MCF 10A (cell line): ENCODE measurements at regions of chr7 and their contacts with region 1.

Region 1: DNA sequence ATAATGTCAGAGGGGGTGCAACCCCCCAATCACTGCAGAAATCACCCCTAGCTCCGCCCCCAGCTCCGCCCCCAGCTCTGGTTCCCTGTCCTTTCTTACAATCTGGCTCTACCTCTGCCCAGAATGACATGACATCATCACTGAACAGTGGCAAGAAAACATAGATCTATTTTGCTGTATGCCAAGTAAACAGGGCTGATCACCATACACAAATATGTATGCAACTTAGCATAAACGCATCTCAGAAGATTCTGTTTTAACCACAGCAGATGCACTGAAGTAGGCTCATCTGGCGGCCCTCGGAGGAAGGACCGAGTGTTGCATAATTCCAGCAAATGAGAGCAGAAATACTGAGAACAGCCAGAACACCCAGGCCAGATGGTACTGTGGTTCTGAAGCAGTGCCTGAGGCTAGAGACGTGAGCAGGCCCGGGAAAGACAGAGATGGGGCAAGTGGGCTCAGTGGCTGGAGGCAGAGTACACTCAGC is 293.3 kb upstream of the KLF14 start:
- DNase-seq: peak; percentile 89
- H3K4me3 Mint-ChIP-seq: peak overlapping the region; percentile 64
- H3K27ac Mint-ChIP-seq: peak overlapping the region; percentile 88
- H3K4me1 Mint-ChIP-seq: peaks cover 31% of the 10 kb centered on the region
- H3K27me3 Mint-ChIP-seq: no peaks in the 10 kb centered on the region
- CTCF ChIP-seq: no peak

Region 2: DNA sequence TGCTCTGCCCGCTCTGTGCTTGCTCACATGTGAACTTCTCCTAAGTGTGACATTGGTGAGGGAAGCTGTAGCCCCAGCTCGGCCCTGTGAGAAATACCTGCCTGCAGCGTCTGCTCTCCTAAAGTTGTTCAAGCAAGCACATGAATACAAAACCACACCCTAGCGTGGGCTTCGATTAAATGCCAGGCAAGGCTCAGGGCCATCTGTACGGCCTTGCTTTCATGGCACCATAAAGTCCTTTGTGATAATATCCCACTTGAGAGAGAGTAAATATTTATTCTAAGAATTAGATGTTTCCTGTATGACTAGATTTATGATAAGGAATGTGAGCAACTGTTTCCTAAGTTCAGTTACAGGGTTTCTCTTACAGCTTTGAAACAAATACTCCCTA is 30.5 kb before region 1 on chr7:
- CTCF ChIA-PET with region 1: interaction called, 3 read pairs
- POLR2A ChIA-PET with region 1: interaction called, 28 read pairs
- intact Hi-C with region 1: no loop called
- DNase-seq: peak; percentile 73
- H3K4me3 Mint-ChIP-seq: peak overlapping the region; percentile 21
- H3K27ac Mint-ChIP-seq: peak overlapping the region; percentile 96
- H3K4me1 Mint-ChIP-seq: peaks cover 54% of the 10 kb centered on the region
- H3K27me3 Mint-ChIP-seq: no peaks in the 10 kb centered on the region
- CTCF ChIP-seq: no peak

Region 3: GRCh38 chr7:131007394-131008330 is 19.7 kb before region 1 on chr7:
- CTCF ChIA-PET with region 1: interaction called, 7 read pairs
- POLR2A ChIA-PET with region 1: interaction called, 61 read pairs
- intact Hi-C with region 1: no loop called
- DNase-seq: peak; percentile 87
- H3K4me3 Mint-ChIP-seq: peak overlapping the region; percentile 15
- H3K27ac Mint-ChIP-seq: peak overlapping the region; percentile 84
- H3K4me1 Mint-ChIP-seq: peaks cover 46% of the 10 kb centered on the region
- H3K27me3 Mint-ChIP-seq: no peaks in the 10 kb centered on the region
- CTCF ChIP-seq: peak; percentile 58

Region 4: GRCh38 chr7:131015655-131015954 is 11.7 kb before region 1 on chr7:
- CTCF ChIA-PET with region 1: interaction called, 7 read pairs
- POLR2A ChIA-PET with region 1: interaction called, 61 read pairs
- intact Hi-C with region 1: loop called (anchors 1 kb)
- DNase-seq: peak; percentile 54
- H3K4me3 Mint-ChIP-seq: no peak overlapping the region
- H3K27ac Mint-ChIP-seq: no peak overlapping the region
- H3K4me1 Mint-ChIP-seq: peaks cover 43% of the 10 kb centered on the region
- H3K27me3 Mint-ChIP-seq: no peaks in the 10 kb centered on the region
- CTCF ChIP-seq: no peak